Sigmoid colon (tissue), 7 donors: ENCODE measurements at regions of chr10 and their contacts with region 1.

Region 1: GRCh38 chr10:96043033-96043932 is at the start of gene CCNJ:
- DNase-seq: peak; percentile 94
- H3K4me3 ChIP-seq: peak within 1 kb of the TSS; percentile 65 to 79 (median 70)
- H3K27ac ChIP-seq: peak within 1 kb of the TSS; percentile 83 to 93 (median 88)
- H3K4me1 ChIP-seq: peaks cover 0 to 21% (median 10%) of the 10 kb centered on the region in 4 donors
- H3K27me3 ChIP-seq: no peaks in the 10 kb centered on the region
- CTCF ChIP-seq: peak in 2 of 4 experiments; percentile 11 to 30
- EP300 ChIP-seq: no peak
- POLR2A ChIP-seq: peak in 1 of 2 donors; percentile 42
- total RNA-seq, gene CCNJ: 3.3 to 6.4 (median 4.6) TPM

Region 2: GRCh38 chr10:95793401-95794045 is 249.8 kb before region 1 on chr10:
- intact Hi-C with region 1: no loop called
- DNase-seq: peak; percentile 72
- H3K4me3 ChIP-seq: no peak overlapping the region
- H3K27ac ChIP-seq: peak overlapping the region; percentile 21 to 68 (median 62)
- H3K4me1 ChIP-seq: peaks cover 0 to 54% (median 21%) of the 10 kb centered on the region in 4 donors
- H3K27me3 ChIP-seq: no peaks in the 10 kb centered on the region
- CTCF ChIP-seq: no peak
- EP300 ChIP-seq: no peak
- POLR2A ChIP-seq: no peak

Region 3: GRCh38 chr10:95907456-95908253 is 135.6 kb before region 1 on chr10 and contains the start of gene CC2D2B:
- intact Hi-C with region 1: loop called (anchors 2 kb)
- DNase-seq: peak; percentile 90
- H3K4me3 ChIP-seq: peak within 1 kb of the TSS; percentile 43 to 70 (median 64)
- H3K27ac ChIP-seq: peak within 1 kb of the TSS; percentile 85 to 93 (median 90)
- H3K4me1 ChIP-seq: peaks cover 0 to 10% (median 4%) of the 10 kb centered on the region in 4 donors
- H3K27me3 ChIP-seq: no peaks in the 10 kb centered on the region
- CTCF ChIP-seq: no peak
- EP300 ChIP-seq: no peak
- POLR2A ChIP-seq: no peak
- total RNA-seq, gene CC2D2B: 1.5 to 7.8 (median 4.8) TPM

Region 4: GRCh38 chr10:95998255-95998784 is 45.0 kb before region 1 on chr10:
- intact Hi-C with region 1: no loop called
- DNase-seq: no peak
- H3K4me3 ChIP-seq: no peak overlapping the region
- H3K27ac ChIP-seq: no peak overlapping the region
- H3K4me1 ChIP-seq: no peaks in the 10 kb centered on the region
- H3K27me3 ChIP-seq: no peaks in the 10 kb centered on the region
- CTCF ChIP-seq: no peak
- EP300 ChIP-seq: no peak
- POLR2A ChIP-seq: no peak

Region 5: DNA sequence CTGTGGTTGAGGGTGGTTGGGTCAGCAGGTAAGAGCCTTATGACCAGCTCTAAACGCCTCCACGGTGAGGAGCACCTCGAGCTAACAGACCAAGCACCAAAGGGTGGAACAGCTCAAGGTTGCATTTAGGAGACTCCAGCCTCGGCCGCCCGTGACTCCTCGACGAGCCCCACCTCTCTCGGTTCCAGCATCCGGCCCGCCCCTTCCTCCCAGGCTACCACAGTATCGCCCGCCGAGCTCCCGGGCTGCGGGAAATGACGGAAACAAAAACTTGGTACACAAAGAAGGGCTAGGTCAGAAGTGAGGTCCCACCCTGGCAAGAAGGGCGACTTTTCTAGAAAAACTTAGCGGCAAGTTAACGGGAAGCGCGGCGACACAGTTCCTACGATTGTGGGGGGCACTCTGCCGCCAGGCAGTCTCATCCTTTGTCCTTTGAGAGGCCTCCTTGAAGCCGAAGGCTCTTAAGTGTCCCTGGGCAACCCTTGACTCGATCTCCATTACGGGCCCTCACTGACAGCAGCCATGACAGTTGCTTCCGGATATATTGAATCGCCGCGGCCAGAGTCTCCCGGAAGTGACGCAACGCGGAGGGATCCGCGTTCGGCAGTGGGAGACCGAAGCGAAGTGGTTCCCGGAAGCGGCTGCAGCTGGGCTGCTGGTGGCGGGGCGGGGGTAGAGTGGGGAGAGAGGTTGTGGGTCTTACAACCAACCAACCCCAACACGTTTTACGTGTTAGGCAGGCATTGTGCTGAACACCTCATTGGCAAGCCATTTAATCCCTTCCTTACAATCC is 46.6 kb after region 1 on chr10:
- intact Hi-C with region 1: loop called (anchors 2 kb)
- DNase-seq: peak; percentile 96
- H3K4me3 ChIP-seq: peak overlapping the region; percentile 62 to 83 (median 66)
- H3K27ac ChIP-seq: peak overlapping the region; percentile 84 to 91 (median 87)
- H3K4me1 ChIP-seq: no peaks in the 10 kb centered on the region
- H3K27me3 ChIP-seq: peaks cover 0 to 27% (median 17%) of the 10 kb centered on the region in 3 donors
- CTCF ChIP-seq: no peak
- EP300 ChIP-seq: peak in 1 of 4 donors; percentile 27
- POLR2A ChIP-seq: no peak